MCF 10A (cell line): ENCODE measurements at regions of chr11 and their contacts with region 1.

Region 1: GRCh38 chr11:117072517-117073461 is 25.4 kb downstream of the SIK3 start:
- DNase-seq: peak; percentile 92
- H3K4me3 Mint-ChIP-seq: no peak overlapping the region
- H3K27ac Mint-ChIP-seq: no peak overlapping the region
- H3K4me1 Mint-ChIP-seq: peaks cover 26% of the 10 kb centered on the region
- H3K27me3 Mint-ChIP-seq: no peaks in the 10 kb centered on the region
- CTCF ChIP-seq: no peak

Region 2: DNA sequence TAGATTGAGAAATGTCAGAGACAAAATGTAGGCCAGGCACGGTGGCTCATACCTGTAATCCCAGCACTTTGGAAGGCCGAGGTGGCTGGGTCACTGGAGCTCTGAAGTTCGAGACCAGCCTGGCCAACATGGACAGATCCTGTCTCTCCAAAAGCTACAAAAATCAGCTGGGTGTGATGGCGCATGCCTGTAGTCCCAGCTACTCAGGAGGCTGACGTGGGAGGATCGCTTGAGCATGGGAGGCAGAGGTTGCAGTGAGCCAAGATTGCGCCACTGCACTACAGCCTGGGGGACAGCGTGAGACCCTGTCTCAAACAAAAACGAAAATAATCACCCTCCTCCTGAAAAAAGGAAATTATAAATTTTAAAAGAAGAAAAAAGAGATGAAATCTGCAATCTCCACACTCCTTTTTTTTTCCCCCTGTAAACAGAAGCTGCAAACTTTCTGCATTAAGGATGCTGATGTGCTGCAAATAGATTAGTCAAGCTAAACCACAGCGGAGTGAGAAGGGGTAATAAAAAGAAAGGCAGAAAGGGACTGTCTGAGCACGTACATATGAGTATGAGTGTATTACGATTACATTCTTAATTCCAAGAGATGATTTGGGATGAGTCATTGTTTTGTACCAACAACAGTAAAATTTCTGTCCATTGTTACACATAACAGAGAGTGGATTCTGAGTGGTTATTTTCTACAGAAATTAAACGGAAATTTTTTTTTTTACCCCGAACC is 61.8 kb before region 1 on chr11:
- CTCF ChIA-PET with region 1: interaction called, 6 read pairs
- POLR2A ChIA-PET with region 1: interaction called, 17 read pairs
- intact Hi-C with region 1: no loop called
- DNase-seq: peak; percentile 90
- H3K4me3 Mint-ChIP-seq: peak overlapping the region; percentile 50
- H3K27ac Mint-ChIP-seq: peak overlapping the region; percentile 62
- H3K4me1 Mint-ChIP-seq: peaks cover 24% of the 10 kb centered on the region
- H3K27me3 Mint-ChIP-seq: no peaks in the 10 kb centered on the region
- CTCF ChIP-seq: no peak

Region 3: DNA sequence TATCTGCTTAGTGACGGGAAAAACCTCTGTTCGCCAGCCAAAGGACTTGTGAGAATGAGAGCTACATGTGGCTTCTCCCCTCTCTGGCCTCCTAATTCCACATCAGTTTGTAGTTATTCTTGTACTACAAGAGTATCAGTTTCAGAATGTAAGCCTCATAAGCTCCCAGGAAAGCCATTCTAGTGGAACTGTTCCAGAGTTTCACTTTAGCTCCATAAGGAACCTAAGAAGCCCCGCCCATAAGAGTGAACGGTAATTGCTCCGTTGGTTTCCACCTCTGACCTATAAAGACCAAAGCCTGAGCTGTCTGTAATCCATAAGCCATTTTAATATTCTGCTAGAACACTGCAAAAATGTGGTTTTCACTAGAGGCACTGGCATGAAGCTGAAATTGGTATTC is 27.6 kb before region 1 on chr11:
- CTCF ChIA-PET with region 1: interaction called, 4 read pairs
- POLR2A ChIA-PET with region 1: interaction called, 19 read pairs
- intact Hi-C with region 1: no loop called
- DNase-seq: peak; percentile 47
- H3K4me3 Mint-ChIP-seq: no peak overlapping the region
- H3K27ac Mint-ChIP-seq: no peak overlapping the region
- H3K4me1 Mint-ChIP-seq: peaks cover 26% of the 10 kb centered on the region
- H3K27me3 Mint-ChIP-seq: no peaks in the 10 kb centered on the region
- CTCF ChIP-seq: no peak

Region 4: GRCh38 chr11:117089685-117090084 is 16.9 kb after region 1 on chr11:
- CTCF ChIA-PET with region 1: interaction called, 10 read pairs
- POLR2A ChIA-PET with region 1: interaction called, 87 read pairs
- intact Hi-C with region 1: no loop called
- DNase-seq: peak; percentile 51
- H3K4me3 Mint-ChIP-seq: peak overlapping the region; percentile 69
- H3K27ac Mint-ChIP-seq: peak overlapping the region; percentile 71
- H3K4me1 Mint-ChIP-seq: peaks cover 22% of the 10 kb centered on the region
- H3K27me3 Mint-ChIP-seq: no peaks in the 10 kb centered on the region
- CTCF ChIP-seq: no peak

Region 5: GRCh38 chr11:117152066-117152465 is 79.3 kb after region 1 on chr11:
- CTCF ChIA-PET with region 1: no interaction called
- POLR2A ChIA-PET with region 1: no interaction called
- intact Hi-C with region 1: no loop called
- DNase-seq: no peak
- H3K4me3 Mint-ChIP-seq: no peak overlapping the region
- H3K27ac Mint-ChIP-seq: no peak overlapping the region
- H3K4me1 Mint-ChIP-seq: no peaks in the 10 kb centered on the region
- H3K27me3 Mint-ChIP-seq: no peaks in the 10 kb centered on the region
- CTCF ChIP-seq: no peak

Region 6: GRCh38 chr11:117479372-117479771 is 406.6 kb after region 1 on chr11:
- CTCF ChIA-PET with region 1: no interaction called
- POLR2A ChIA-PET with region 1: no interaction called
- intact Hi-C with region 1: no loop called
- DNase-seq: no peak
- H3K4me3 Mint-ChIP-seq: no peak overlapping the region
- H3K27ac Mint-ChIP-seq: no peak overlapping the region
- H3K4me1 Mint-ChIP-seq: no peaks in the 10 kb centered on the region
- H3K27me3 Mint-ChIP-seq: peaks cover 59% of the 10 kb centered on the region
- CTCF ChIP-seq: no peak